Naive thymus-derived CD4-positive, alpha-beta T cell (primary cell): ENCODE measurements at regions of chr1 and their contacts with region 1.

Region 1: DNA sequence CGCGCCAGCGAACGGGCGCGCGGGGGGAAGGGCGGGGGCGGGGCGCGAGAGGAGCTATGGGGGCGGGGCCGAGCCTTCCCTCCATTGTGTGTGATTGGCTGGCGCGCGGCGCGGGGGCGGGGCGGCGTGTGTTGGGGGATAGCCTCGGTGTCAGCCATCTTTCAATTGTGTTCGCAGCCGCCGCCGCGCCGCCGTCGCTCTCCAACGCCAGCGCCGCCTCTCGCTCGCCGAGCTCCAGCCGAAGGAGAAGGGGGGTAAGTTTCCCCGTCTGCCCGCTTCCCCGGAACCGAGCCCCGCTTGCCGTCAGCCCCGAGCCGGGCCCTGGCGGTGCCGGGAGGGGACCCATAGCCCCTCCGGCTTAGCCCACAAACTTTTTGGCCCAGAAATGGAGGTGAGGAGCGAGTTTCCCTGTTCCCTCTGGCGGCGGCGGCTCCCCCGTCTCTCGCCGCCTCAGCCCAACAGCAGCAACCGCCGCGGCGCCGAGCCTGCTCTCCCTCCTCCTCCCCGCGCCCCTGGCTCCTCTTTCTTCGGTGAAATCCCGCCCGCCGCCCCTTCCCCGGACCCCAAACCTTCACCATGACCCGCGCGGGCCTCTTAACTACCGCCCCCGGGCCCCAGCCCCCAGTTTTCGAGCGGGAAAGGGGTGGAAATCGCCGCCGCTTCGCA is at the start of gene H3-3A:
- DNase-seq: peak; percentile 97 to 99 (median 98)
- ATAC-seq: peak; percentile 93
- H3K4me3 ChIP-seq: peak within 1 kb of the TSS; percentile 80
- H3K4me3 Mint-ChIP-seq: peak within 1 kb of the TSS; percentile 99 to 100 (median 100)
- H3K27ac ChIP-seq: peak within 1 kb of the TSS; percentile 97
- H3K27ac Mint-ChIP-seq: peak within 1 kb of the TSS; percentile 99 to 100 (median 100)
- H3K4me1 ChIP-seq: peaks cover 24 to 31% of the 10 kb centered on the region in 2 donors
- H3K4me1 Mint-ChIP-seq: peaks cover 34 to 63% (median 51%) of the 10 kb centered on the region in 7 donors
- H3K27me3 ChIP-seq: no peaks in the 10 kb centered on the region
- H3K27me3 Mint-ChIP-seq: no peaks in the 10 kb centered on the region
- total RNA-seq, gene H3-3A: 388 to 561 (median 412) TPM

Region 2: DNA sequence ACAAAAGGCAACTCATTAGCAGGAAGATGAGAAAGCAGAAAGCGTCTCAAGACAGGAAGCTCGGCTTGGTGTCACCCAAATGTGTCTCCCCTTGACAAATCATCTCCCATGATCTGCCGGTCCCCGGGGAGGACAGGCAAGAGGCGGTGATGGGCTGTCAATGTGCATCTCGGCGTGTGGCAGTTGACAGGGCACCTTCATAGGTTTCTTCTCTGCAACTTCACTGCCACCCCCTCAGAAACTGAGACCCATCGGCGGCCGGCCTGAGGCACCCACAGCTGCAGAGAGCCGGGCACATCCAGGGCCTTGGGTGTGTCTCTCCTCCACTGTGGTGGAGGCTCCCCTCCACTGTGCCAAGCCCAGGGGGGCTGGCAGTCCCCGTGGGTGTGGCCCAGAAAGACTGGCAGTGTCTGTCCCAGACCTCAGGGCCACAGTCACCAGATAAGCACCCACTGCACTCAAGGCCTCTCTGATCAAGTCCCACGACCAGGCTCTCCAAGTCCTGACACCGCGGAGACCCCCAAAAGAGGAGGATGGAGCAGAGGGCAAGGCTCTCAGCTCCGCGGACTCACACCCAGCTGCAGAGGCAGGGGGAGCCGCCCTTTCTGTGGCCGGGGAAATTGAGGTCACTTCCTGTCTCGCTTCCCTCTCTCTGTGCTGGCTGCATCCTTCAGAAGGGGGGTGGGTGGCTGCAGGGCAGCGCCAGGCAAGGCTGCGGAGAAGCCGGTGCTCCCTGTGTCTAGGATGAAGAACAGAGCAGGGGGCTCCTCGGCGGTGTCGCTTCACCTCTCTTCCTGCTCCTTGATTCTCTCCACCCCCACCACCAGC is 595.3 kb before region 1 on chr1:
- CTCF ChIA-PET with region 1: no interaction called
- POLR2A ChIA-PET with region 1: interaction called, 23 read pairs
- intact Hi-C with region 1: loop called (anchors 1 kb)
- DNase-seq: peak; percentile 57 to 85 (median 81)
- ATAC-seq: peak; percentile 91
- H3K4me3 ChIP-seq: peak overlapping the region; percentile 94
- H3K4me3 Mint-ChIP-seq: peak overlapping the region; percentile 81 to 94 (median 92)
- H3K27ac ChIP-seq: peak overlapping the region; percentile 85
- H3K27ac Mint-ChIP-seq: peak overlapping the region; percentile 89 to 98 (median 98)
- H3K4me1 ChIP-seq: peaks cover 22 to 40% of the 10 kb centered on the region in 2 donors
- H3K4me1 Mint-ChIP-seq: peaks cover 33 to 65% (median 48%) of the 10 kb centered on the region in 7 donors
- H3K27me3 ChIP-seq: no peaks in the 10 kb centered on the region
- H3K27me3 Mint-ChIP-seq: no peaks in the 10 kb centered on the region

Region 3: GRCh38 chr1:225923692-225924555 is 138.8 kb before region 1 on chr1 and contains the start of gene PYCR2:
- CTCF ChIA-PET with region 1: no interaction called
- POLR2A ChIA-PET with region 1: interaction called, 11 read pairs
- intact Hi-C with region 1: loop called (anchors 1 to 2 kb)
- DNase-seq: peak; percentile 92 to 97 (median 94)
- ATAC-seq: peak; percentile 99
- H3K4me3 ChIP-seq: peak within 1 kb of the TSS; percentile 100
- H3K4me3 Mint-ChIP-seq: peak within 1 kb of the TSS; percentile 86 to 98 (median 94)
- H3K27ac ChIP-seq: peak within 1 kb of the TSS; percentile 95
- H3K27ac Mint-ChIP-seq: peak within 1 kb of the TSS; percentile 90 to 98 (median 95)
- H3K4me1 ChIP-seq: peaks cover 11 to 65% of the 10 kb centered on the region in 2 donors
- H3K4me1 Mint-ChIP-seq: peaks cover 45 to 75% (median 60%) of the 10 kb centered on the region in 7 donors
- H3K27me3 ChIP-seq: no peaks in the 10 kb centered on the region
- H3K27me3 Mint-ChIP-seq: no peaks in the 10 kb centered on the region
- total RNA-seq, gene PYCR2: 46.4 to 137 (median 109) TPM

Region 4: DNA sequence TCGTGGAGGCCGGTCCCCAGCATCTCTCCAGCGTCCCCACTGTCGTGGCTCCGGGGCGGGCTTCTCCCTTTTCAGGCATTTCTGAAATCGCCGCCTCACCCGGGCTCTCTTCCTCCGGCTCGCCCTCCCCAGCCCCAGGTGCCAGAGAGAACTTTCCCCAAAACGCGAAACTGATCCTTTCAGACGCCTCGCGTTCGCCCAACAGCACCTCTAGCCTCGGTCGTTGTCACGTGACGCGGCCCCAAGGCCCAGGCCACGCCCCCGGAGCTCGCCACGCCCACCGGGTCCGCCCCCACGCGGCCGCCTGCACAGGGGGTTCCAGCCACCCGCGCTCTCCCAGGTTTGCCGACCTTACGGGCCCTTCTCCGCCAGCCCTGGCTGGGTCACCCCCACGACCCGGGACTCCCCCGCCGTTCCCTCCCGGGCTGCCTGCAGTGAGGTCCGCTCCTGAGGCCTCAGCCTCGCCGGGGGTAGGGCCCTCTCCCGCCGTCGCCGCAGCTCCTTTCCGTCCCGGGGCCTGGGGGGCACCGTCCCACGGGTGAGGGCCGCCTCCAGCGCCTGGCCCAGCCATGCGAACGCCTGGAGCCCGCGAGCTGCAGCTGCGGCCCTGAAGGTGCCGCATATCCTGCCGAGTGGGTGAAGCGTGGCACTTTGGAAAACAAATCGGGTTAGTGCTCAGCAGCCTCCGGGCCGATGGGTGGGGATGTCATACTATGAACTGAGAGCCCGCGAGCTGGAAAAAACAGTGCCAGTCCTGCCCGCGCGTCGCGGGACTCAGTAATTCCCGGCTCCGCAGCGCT is 20.8 kb after region 1 on chr1:
- CTCF ChIA-PET with region 1: interaction called, 14 read pairs
- POLR2A ChIA-PET with region 1: interaction called, 41 read pairs
- intact Hi-C with region 1: loop called (anchors 1 kb)
- DNase-seq: peak; percentile 79 to 98 (median 87)
- ATAC-seq: peak; percentile 98
- H3K4me3 ChIP-seq: peak overlapping the region; percentile 77
- H3K4me3 Mint-ChIP-seq: peak overlapping the region; percentile 78 to 94 (median 91)
- H3K27ac ChIP-seq: peak overlapping the region; percentile 65
- H3K27ac Mint-ChIP-seq: peak overlapping the region; percentile 25 to 93 (median 75)
- H3K4me1 ChIP-seq: peaks cover 5 to 8% of the 10 kb centered on the region in 2 donors
- H3K4me1 Mint-ChIP-seq: peaks cover 5 to 12% (median 8%) of the 10 kb centered on the region in 7 donors
- H3K27me3 ChIP-seq: no peaks in the 10 kb centered on the region
- H3K27me3 Mint-ChIP-seq: peaks cover 0 to 10% (median 0%) of the 10 kb centered on the region in 5 donors

Region 5: DNA sequence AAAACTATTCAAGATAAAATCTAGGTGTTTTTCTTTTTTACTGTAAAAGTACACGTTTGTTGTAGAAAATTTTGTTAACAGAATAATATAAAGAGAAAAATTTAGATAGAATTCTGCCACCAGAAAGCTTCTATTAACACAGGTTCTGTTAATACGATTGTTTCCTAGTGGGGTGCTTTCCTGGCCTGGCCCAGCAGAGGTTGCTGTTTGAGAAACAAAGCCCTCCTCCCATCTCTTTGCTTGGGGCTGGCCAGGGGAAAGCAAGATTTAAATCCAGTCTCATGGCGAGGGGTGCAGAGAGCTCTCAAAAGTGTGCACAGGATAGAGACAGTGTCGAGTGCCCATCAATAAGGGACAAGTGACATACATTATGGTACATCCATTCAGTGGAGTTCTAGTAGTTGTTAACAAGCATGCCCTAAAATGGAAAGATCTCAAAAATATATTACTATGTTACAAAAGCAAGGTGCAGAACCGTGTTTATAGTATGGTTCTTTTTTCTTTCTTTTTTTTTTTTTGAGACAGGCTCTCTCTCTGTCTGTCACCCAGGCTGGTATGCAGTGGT is 138.4 kb after region 1 on chr1:
- CTCF ChIA-PET with region 1: interaction called, 12 read pairs
- POLR2A ChIA-PET with region 1: interaction called, 3 read pairs
- intact Hi-C with region 1: loop called in 1 of 2 experiments (anchors 1 kb)
- DNase-seq: no peak
- ATAC-seq: no peak
- H3K4me3 ChIP-seq: no peak overlapping the region
- H3K4me3 Mint-ChIP-seq: no peak overlapping the region
- H3K27ac ChIP-seq: no peak overlapping the region
- H3K27ac Mint-ChIP-seq: no peak overlapping the region
- H3K4me1 ChIP-seq: no peaks in the 10 kb centered on the region
- H3K4me1 Mint-ChIP-seq: peaks cover 0 to 5% (median 0%) of the 10 kb centered on the region in 7 donors
- H3K27me3 ChIP-seq: no peaks in the 10 kb centered on the region
- H3K27me3 Mint-ChIP-seq: peaks cover 0 to 18% (median 4%) of the 10 kb centered on the region in 5 donors

Region 6: GRCh38 chr1:226736908-226737818 is 674.5 kb after region 1 on chr1:
- CTCF ChIA-PET with region 1: no interaction called
- POLR2A ChIA-PET with region 1: no interaction called
- intact Hi-C with region 1: loop called in 1 of 2 experiments (anchors 10 kb)
- DNase-seq: peak in 7 of 9 donors; percentile 45 to 66 (median 59)
- ATAC-seq: peak; percentile 51
- H3K4me3 ChIP-seq: peak overlapping the region; percentile 99
- H3K4me3 Mint-ChIP-seq: peak overlapping the region; percentile 89 to 99 (median 93)
- H3K27ac ChIP-seq: peak overlapping the region; percentile 92
- H3K27ac Mint-ChIP-seq: peak overlapping the region; percentile 81 to 99 (median 97)
- H3K4me1 ChIP-seq: peaks cover 22 to 38% of the 10 kb centered on the region in 2 donors
- H3K4me1 Mint-ChIP-seq: peaks cover 14 to 54% (median 35%) of the 10 kb centered on the region in 7 donors
- H3K27me3 ChIP-seq: no peaks in the 10 kb centered on the region
- H3K27me3 Mint-ChIP-seq: no peaks in the 10 kb centered on the region

Region 7: DNA sequence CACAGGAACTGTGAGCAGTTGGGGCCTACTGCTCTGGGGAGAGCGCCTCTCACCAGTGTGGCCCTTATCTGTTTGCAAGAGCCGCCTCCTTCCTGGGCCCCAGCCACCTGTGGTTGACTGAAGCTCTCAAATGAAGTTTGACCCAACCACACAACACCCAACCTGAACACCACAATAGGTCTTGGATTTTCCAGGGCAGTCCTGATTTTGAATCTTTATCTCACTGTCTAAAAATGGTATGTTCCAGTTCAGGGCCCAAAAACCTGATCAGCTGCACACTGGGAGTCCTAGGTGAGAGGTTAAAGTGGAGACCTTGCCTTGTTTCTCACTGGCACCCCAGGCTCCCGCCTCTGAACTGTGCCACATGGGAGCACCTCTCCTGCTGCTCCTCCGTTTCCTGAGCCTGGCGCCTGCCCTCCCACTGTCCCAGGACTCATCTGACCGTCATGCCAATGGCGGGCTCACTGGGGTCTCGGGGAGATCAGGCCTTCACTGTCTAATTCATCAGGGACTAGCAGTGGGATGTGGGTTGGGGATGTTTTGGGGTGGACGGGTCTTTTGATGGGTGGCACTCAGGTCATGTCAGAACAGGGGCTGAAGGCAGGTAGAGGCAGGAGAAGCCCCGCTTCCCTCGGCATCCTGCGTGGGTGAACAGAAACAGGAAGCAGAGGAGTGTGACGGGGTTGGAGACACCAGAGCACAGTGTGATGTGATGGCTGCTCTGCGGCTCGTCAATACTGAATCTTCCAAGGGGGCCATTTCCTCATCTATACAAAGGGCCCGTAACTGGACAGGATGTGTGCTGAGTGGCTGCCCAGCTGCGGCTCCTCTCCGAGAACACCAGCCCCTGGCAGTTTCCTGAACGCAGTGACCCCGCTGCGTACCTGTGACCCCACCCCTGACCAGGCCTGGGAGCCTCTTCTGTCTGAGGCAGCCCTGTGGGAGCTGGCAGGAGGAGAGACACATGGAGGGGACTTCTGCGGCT is 736.0 kb after region 1 on chr1:
- CTCF ChIA-PET with region 1: no interaction called
- POLR2A ChIA-PET with region 1: no interaction called
- intact Hi-C with region 1: no loop called
- DNase-seq: peak; percentile 24 to 75 (median 67)
- ATAC-seq: peak; percentile 85
- H3K4me3 ChIP-seq: peak overlapping the region; percentile 33
- H3K4me3 Mint-ChIP-seq: peak overlapping the region; percentile 66 to 86 (median 72)
- H3K27ac ChIP-seq: peak overlapping the region; percentile 67
- H3K27ac Mint-ChIP-seq: peak overlapping the region; percentile 96 to 100 (median 99)
- H3K4me1 ChIP-seq: peaks cover 31 to 33% of the 10 kb centered on the region in 2 donors
- H3K4me1 Mint-ChIP-seq: peaks cover 27 to 47% (median 40%) of the 10 kb centered on the region in 7 donors
- H3K27me3 ChIP-seq: no peaks in the 10 kb centered on the region
- H3K27me3 Mint-ChIP-seq: peaks cover 0 to 12% (median 0%) of the 10 kb centered on the region in 5 donors